ENCODE measurements at regions of chr10 and their contacts with region 1.

Region 1: DNA sequence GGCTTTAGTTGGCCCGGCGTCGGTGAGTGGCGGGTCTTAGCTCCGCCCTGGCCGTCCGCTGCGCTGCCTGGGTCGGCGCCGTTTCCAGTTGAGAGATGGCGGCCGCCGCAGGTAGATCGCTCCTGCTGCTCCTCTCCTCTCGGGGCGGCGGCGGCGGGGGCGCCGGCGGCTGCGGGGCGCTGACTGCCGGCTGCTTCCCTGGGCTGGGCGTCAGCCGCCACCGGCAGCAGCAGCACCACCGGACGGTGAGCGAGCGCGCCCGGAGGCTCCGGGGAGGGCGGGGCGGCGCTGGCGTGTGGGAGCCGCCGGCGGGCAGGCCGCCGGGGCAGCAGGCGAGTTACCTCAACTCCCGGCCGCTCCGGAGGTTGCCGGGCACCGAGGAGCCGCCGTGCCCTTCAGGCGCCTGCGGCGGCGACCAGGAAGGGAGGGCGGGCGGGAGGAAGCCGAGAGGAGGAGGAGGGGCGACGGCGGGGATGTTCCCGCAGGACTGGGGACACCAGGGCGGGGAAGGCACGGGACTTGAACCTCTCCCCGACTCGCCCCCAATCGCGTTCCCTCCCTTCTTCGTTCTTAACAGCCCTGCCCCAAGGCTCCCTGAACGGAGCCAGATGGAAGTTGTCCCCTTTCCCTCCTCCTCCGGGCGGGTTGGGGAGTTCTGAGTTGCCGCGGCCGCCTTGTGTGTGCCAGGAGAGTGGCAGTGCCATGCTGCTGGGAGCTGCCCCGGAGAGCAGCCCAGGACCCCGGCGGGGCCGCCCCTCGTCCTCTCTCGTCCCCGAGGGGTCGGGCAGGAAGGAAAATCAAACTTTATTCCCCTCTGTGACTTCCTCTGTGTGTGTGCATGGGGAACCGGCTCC is at the start of gene MCU:
- DNase-seq: peak; percentile 37
- ATAC-seq: peak; percentile 96
- H3K4me3 ChIP-seq: peak within 1 kb of the TSS; percentile 95
- H3K27ac ChIP-seq: peak within 1 kb of the TSS; percentile 83
- H3K4me1 ChIP-seq: peaks cover 8% of the 10 kb centered on the region; the same call in 1 of the 2 replicates
- H3K27me3 ChIP-seq: no peaks in the 10 kb centered on the region
- CTCF ChIP-seq: no peak
- POLR2A ChIP-seq: peak; percentile 60; the same call in 1 of the 2 replicates
- RAD21 ChIP-seq: no peak; the same call in 1 of the 2 replicates
- total RNA-seq, gene MCU: 36.2 and 39.7 TPM in 2 replicates

Region 2: GRCh38 chr10:72375585-72375984 is 316.7 kb before region 1 on chr10:
- CTCF ChIA-PET with region 1: no interaction called
- POLR2A ChIA-PET with region 1: no interaction called
- dilution Hi-C with region 1: no loop called
- in situ Hi-C with region 1: no loop called
- intact Hi-C with region 1: loop called (anchors 5 kb)
- DNase-seq: no peak
- ATAC-seq: peak; percentile 72
- H3K4me3 ChIP-seq: no peak overlapping the region
- H3K27ac ChIP-seq: no peak overlapping the region
- H3K4me1 ChIP-seq: no peaks in the 10 kb centered on the region
- H3K27me3 ChIP-seq: no peaks in the 10 kb centered on the region
- CTCF ChIP-seq: peak; percentile 15; the same call in 1 of the 2 replicates
- POLR2A ChIP-seq: no peak
- RAD21 ChIP-seq: peak; percentile 36

Region 3: GRCh38 chr10:72567884-72568640 is 124.2 kb before region 1 on chr10:
- CTCF ChIA-PET with region 1: no interaction called
- POLR2A ChIA-PET with region 1: no interaction called
- dilution Hi-C with region 1: no loop called
- in situ Hi-C with region 1: no loop called
- intact Hi-C with region 1: no loop called
- DNase-seq: no peak
- ATAC-seq: no peak
- H3K4me3 ChIP-seq: no peak overlapping the region
- H3K27ac ChIP-seq: no peak overlapping the region
- H3K4me1 ChIP-seq: peaks cover 6% of the 10 kb centered on the region; the same call in 1 of the 2 replicates
- H3K27me3 ChIP-seq: no peaks in the 10 kb centered on the region
- CTCF ChIP-seq: peak; percentile 28
- POLR2A ChIP-seq: no peak
- RAD21 ChIP-seq: 0 out of 2 replicates have a peak, but pooled peaks have one; percentile 7

Region 4: DNA sequence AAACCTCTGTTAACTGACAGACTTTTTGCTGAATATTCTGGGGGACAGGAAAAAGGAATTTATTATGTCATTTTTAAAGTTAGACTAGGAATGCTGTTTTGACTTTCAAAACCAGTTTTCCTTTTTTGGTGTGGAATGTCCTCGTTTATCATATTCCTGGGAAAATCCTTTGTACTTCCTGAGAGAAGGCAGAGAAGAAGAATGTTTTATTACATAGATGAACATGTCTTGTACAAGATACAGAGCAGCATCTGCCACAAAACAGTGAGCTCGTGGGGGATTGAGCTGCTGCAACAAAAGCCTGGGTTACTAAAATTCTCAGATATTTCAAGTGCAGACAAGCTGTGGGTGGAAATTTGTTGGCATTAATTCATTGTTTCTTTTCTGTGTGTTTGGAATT is 19.9 kb after region 1 on chr10:
- CTCF ChIA-PET with region 1: no interaction called
- POLR2A ChIA-PET with region 1: no interaction called
- dilution Hi-C with region 1: no loop called
- in situ Hi-C with region 1: no loop called
- intact Hi-C with region 1: no loop called
- DNase-seq: peak; percentile 61
- ATAC-seq: peak; percentile 70
- H3K4me3 ChIP-seq: no peak overlapping the region
- H3K27ac ChIP-seq: peak overlapping the region; percentile 90
- H3K4me1 ChIP-seq: peaks cover 7% of the 10 kb centered on the region
- H3K27me3 ChIP-seq: no peaks in the 10 kb centered on the region
- CTCF ChIP-seq: no peak
- POLR2A ChIP-seq: no peak
- RAD21 ChIP-seq: no peak